Right ventricle myocardium inferior (tissue), 1 donor: ENCODE measurements at regions of chr9 and their contacts with region 1.

Region 1: GRCh38 chr9:114738581-114739316 is 56.8 kb upstream of the TEX48 start:
- DNase-seq: peak; percentile 77
- ATAC-seq: peak; percentile 79

Region 2: DNA sequence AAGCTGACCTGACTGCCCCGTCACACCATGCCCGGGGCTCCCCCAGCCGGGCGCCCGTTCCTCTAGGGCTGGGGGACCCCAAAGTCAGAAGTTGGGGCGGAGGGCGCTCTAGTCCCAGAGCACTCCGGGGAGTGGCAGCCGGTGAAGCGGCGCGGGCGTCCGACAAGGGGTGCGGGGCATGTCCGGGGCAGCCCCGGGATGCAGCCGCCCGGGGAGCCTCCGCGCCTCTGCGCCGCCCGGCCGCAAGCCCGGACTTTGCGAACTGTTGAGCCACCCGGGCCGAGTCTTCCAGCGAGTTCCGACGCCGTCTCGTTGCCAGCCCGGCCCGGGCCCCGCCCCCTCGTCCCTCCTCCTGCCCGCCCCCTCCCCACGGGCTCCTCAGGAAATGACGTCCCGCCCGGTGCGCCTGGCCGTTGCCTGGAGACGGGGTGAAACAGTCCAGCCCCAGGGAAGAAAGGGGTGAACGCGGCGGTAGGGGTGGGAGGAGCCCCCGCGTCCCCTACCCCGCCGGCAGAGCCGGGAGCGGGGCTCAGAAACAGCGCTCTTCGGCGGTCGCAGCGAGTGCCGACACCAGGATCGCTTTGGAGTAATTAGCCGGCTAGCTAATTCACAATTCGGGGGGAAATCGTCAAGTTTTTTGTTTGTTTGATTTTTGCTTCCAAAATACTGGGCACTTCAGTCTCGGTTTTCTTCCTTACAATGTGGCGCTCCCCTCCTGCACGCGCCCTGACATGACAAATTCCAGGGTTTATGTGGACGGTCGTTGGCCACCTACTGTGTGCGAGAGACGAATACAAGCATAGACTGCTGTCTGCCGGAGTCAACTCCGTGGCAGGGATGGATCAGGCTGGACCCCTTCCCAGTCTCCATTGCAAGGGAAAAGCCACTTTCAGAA is 233.3 kb before region 1 on chr9 and contains the start of gene WHRN:
- intact Hi-C with region 1: no loop called
- DNase-seq: peak; percentile 96
- ATAC-seq: peak; percentile 96
- total RNA-seq, gene WHRN: 0.49 TPM

Region 3: GRCh38 chr9:114691046-114691955 is 47.4 kb before region 1 on chr9:
- intact Hi-C with region 1: no loop called
- DNase-seq: no peak
- ATAC-seq: no peak

Region 4: DNA sequence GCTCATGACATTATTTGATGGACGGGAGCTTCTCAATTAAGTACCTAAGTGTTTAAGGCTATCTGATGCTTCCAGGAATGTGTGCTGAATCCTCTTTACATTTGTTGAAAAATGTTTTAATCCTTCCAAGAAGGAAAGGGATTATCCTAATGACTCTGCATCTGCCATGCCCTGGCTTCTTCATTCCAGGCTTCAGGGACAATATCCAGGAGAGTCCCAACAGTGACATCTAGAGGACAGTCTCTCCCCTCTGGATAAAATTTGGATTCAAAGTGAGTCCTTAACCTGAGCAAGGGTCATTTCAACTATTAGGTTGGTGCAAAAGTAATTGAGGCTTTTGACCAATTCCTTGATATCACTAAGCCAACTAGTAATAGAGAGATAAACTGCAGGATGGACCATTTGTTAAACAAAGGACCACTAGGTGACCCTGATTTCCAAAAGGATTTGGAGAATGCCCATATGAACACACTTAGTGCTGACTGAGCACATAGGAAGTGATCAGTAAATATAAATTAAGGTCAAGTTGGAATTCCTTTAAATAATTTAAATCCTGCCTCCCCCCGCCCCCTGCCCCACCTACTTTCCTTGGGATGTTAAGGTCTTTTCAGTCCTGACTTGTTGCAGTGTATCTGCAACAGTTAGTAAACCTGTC is 172.5 kb after region 1 on chr9:
- intact Hi-C with region 1: loop called (anchors 2 kb)
- DNase-seq: no peak
- ATAC-seq: peak; percentile 59